AG04449 (cell line): ENCODE measurements at regions of chrX and their contacts with region 1.

Region 1: GRCh38 chrX:41116948-41117347 is 31.7 kb downstream of the USP9X start:
- DNase-seq: no peak
- H3K4me3 ChIP-seq: no peak overlapping the region
- CTCF ChIP-seq: no peak

Region 2: DNA sequence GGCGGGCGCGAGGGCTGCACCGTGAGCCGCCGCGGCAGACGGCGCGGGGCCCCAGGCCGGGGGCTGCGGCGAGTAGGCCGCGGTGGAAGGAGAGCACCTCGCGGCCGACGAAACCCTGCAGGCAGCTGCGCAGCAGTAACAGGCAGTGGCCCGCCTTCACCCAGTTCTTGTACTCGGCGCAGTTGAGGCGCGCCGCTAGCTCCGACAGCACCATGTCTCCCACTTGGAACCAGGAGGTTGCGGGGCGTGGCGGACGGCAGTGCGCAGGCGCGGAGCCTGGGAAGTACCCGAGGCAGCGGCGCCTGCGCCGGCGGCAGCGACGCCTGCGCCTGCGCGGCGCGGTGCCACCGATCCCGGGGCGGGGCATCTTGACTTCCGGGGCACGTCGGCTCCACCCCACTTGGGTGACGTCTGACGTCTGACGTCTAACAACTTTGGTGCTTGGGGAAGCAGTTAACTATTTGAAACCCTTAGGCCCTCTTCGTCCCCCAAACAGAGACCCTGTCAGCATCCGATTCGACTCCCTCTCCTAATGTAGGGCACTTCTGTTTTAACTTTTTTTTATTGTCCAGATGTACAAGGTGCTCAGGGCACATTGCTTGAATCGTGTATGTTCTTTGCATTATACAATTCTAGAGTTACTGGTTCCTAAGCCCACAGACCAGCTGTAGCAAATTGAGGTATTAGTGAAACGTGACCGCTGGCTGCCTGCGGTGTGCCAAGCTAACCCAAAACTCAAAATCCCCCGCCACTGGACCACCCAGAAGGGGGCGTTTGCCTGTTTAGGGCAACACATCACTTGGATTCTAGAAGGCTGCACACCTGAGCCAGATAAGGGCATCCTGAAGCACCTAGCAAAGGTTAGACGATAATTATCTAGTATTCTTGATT is 469.4 kb before region 1 on chrX and contains the start of gene CXorf38:
- CTCF ChIA-PET with region 1: interaction called, 10 read pairs
- POLR2A ChIA-PET with region 1: no interaction called
- DNase-seq: no peak
- H3K4me3 ChIP-seq: peak within 1 kb of the TSS; percentile 68
- CTCF ChIP-seq: no peak

Region 3: DNA sequence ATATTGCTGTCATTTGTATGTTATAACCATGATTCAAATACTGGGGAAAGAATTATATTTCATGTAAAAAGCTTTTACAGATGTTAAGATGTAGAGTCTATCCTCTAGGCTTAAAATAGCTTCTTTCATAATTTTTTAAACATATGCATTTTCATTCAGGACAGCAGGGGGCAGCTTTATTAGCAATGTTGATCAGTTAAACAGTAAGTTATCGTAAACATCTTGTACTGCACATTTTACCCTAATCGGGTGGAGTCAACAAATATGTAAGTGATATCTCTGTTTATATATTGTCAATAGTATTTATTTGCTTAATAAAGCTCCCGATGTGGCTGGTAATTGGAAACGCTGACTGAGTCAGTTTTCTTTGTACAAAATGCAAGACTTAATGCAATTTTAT is 239.1 kb before region 1 on chrX:
- CTCF ChIA-PET with region 1: interaction called, 39 read pairs
- POLR2A ChIA-PET with region 1: no interaction called
- DNase-seq: no peak
- H3K4me3 ChIP-seq: no peak overlapping the region
- CTCF ChIP-seq: peak; percentile 11

Region 4: DNA sequence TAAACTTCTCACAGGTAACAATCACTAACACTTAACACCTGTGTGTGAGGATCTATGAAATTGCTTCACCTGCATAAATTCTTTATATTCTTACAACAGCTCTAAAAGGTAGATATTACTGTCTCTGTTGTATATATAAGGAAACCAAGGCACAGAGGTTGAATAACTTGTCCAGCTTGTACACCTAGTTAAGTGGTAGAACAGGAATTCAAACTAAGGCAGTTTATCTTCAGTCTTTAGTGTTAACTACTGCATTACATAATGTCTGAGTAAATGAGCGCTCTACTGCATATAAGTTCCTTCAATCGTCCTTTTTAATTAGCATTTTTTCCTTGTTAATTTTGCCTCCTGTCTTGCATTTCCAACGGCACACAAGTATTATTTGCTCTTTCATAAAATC is 16.7 kb before region 1 on chrX:
- CTCF ChIA-PET with region 1: interaction called, 24 read pairs
- POLR2A ChIA-PET with region 1: no interaction called
- DNase-seq: no peak
- H3K4me3 ChIP-seq: no peak overlapping the region
- CTCF ChIP-seq: no peak

Region 5: DNA sequence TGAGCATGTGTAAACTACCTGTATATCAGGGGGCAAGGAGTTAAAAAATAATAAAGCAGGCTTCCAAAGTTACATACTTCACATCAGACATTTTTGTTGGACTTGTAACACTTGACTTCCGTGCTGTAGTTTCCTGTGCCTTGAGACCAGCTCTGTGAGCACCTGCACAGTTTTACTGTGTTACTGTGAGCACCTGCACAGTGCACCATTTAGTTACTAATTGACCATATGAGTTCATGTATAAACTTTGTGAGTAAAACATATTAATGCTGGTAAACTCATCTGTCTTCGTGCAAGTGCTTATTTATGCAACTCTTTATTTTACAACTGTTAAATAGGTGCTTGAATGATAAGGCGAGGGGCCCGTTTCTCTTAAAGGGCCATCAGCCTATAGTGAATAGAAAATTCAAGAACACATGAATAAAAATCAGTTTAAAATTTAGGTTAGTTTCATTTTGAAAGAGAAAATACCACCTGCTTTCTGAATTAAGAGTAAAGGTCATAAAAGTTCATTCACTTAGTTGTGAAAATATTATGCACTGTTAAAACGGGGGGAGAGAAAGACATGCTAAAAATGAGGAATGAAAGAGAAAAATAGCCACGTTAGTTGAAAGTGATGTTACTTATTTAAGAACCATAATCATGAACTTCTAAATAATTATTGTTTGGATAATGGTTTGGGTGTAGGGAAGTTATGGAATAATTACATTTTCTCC is 10.7 kb after region 1 on chrX:
- CTCF ChIA-PET with region 1: interaction called, 14 read pairs
- POLR2A ChIA-PET with region 1: no interaction called
- DNase-seq: no peak
- H3K4me3 ChIP-seq: no peak overlapping the region
- CTCF ChIP-seq: no peak

Region 6: DNA sequence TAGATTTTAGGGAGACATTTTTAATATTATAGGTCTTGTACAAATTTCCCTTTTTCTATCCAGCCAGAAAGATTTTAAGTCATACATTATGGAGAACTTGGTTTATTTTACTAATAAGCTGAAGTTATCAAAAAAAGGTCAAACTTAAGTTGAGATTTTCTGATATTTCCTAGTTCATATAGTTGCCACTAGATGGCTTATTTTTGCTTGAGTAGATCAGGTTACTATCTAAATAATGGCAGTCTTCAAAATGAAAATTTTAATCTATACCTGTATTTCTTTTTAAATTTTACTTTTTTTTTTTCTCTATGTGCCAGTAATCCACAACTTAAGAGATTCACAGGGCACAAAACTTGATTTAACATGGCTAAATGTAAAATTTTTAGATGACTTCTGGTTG is 20.6 kb after region 1 on chrX:
- CTCF ChIA-PET with region 1: interaction called, 12 read pairs
- POLR2A ChIA-PET with region 1: no interaction called
- DNase-seq: no peak
- H3K4me3 ChIP-seq: no peak overlapping the region
- CTCF ChIP-seq: peak; percentile 9

Region 7: GRCh38 chrX:41209853-41210252 is 92.9 kb after region 1 on chrX:
- CTCF ChIA-PET with region 1: no interaction called
- POLR2A ChIA-PET with region 1: no interaction called
- DNase-seq: no peak
- H3K4me3 ChIP-seq: no peak overlapping the region
- CTCF ChIP-seq: no peak

Region 8: DNA sequence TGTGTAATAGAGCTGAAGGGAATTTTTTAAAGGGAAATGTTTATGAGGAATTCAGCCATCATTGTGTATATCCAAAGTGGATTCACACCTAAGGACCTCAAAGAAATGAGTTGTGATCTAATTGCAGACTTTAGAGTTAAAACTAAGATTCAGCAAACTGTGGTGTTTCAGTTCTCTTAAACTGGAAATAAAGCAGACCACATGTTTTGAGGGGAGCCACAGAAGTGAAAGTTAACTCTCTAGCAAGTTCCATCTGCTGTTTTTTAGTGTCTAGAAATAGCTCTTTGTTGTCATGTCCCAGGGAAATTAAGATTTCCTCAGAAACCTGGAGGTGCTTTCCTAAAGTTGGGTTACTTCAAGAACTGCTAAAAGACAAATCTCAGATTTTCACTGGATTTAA is 119.7 kb after region 1 on chrX:
- CTCF ChIA-PET with region 1: no interaction called
- POLR2A ChIA-PET with region 1: no interaction called
- DNase-seq: no peak
- H3K4me3 ChIP-seq: no peak overlapping the region
- CTCF ChIP-seq: no peak

Region 9: DNA sequence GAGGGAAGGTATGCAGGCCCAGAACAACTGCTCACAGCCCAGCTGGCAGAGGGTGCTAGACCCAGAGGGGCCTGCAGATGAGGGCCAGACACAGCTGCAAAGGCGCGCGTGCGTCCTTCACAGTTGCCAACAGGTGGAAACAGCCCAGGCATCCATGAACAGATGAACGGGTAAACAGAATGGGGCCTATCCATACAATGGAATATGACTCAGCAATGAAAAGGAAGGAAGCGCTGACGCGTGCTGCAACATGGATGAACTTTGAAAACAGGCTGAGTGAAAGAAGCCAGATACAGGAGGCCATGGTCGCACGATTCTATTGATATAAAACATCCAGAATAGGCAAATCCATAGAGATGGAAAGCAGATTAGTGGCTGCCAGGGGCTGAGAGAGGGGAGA is 133.9 kb after region 1 on chrX:
- CTCF ChIA-PET with region 1: no interaction called
- POLR2A ChIA-PET with region 1: no interaction called
- DNase-seq: no peak
- H3K4me3 ChIP-seq: no peak overlapping the region
- CTCF ChIP-seq: no peak

Region 10: DNA sequence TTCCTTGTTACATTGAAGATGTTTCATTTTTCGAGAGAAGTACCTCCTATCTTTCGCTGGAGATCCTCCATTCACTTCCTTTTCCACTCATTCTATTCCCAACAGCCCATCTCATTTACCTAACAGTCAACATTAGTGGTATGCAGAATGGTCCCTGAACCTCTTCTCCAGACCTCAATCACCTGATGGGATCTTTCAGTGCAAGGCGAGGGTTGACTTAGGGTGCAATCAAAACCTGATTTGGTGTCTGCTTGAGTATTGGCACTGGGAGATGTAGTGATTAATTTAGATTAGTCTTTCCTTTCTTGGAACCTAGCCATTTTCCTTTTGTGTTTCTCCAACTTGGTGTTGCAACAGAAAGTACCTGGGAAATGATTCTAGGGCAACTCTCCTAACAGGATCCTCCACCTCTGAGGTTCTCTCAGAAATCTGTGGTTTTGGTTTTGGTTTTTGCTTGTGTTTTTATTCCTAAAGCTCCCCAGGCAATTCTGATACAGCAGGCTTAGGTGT is 235.4 kb after region 1 on chrX:
- CTCF ChIA-PET with region 1: no interaction called
- POLR2A ChIA-PET with region 1: no interaction called
- DNase-seq: no peak
- H3K4me3 ChIP-seq: no peak overlapping the region
- CTCF ChIP-seq: no peak